CD4-positive, alpha-beta T cell (primary cell): ENCODE measurements at regions of chr20 and their contacts with region 1.

Region 1: DNA sequence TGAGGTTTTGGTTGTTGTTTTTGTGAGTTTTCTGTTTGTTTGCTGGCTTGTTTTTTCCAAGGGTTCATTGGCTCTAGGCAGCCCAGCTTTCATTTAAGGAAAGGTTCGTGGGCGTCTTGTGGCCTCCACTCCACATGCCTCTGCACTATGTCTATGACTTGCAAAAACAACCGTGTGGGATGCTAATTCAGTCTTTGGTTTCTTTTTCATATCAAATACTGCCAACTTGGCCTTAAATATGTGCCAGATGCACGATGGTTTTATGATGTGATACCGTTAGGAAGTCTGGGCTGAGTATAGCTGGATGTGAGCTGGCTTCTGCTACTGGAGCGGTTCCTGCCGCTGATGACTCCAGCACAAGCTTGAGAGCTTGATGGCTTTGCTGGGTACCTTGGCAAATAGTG is 96.3 kb downstream of the BMP2 start:
- DNase-seq: no peak
- ATAC-seq: no peak
- H3K4me3 ChIP-seq: no peak overlapping the region
- H3K4me3 Mint-ChIP-seq: no peak overlapping the region
- H3K27ac ChIP-seq: no peak overlapping the region
- H3K27ac Mint-ChIP-seq: no peak overlapping the region
- H3K4me1 ChIP-seq: no peaks in the 10 kb centered on the region
- H3K4me1 Mint-ChIP-seq: no peaks in the 10 kb centered on the region
- H3K27me3 ChIP-seq: no peaks in the 10 kb centered on the region
- H3K27me3 Mint-ChIP-seq: no peaks in the 10 kb centered on the region
- CTCF ChIP-seq: no peak

Region 2: DNA sequence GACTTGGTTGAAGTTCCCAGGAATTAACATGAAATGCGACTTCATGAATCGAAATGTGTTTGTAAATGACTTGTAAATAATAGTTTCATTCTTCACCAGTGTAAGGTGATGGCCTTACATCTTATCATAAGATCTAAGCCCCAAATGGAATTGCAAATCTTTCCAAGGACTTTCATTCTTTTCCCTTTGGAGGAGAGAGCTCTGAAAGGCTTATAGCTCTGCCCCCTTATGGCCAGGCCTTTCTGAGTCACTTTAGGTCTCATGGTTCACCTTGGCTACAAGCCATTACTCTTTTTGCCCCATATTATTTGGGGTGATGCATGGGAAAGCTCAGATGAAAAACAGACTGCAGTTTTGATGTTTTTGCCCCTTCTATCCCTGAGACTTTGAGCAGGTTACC is 305.5 kb before region 1 on chr20:
- CTCF ChIA-PET with region 1: no interaction called
- POLR2A ChIA-PET with region 1: no interaction called
- intact Hi-C with region 1: no loop called
- DNase-seq: no peak
- ATAC-seq: no peak
- H3K4me3 ChIP-seq: no peak overlapping the region
- H3K4me3 Mint-ChIP-seq: no peak overlapping the region
- H3K27ac ChIP-seq: no peak overlapping the region
- H3K27ac Mint-ChIP-seq: no peak overlapping the region
- H3K4me1 ChIP-seq: no peaks in the 10 kb centered on the region
- H3K4me1 Mint-ChIP-seq: no peaks in the 10 kb centered on the region
- H3K27me3 ChIP-seq: no peaks in the 10 kb centered on the region
- H3K27me3 Mint-ChIP-seq: no peaks in the 10 kb centered on the region
- CTCF ChIP-seq: no peak

Region 3: DNA sequence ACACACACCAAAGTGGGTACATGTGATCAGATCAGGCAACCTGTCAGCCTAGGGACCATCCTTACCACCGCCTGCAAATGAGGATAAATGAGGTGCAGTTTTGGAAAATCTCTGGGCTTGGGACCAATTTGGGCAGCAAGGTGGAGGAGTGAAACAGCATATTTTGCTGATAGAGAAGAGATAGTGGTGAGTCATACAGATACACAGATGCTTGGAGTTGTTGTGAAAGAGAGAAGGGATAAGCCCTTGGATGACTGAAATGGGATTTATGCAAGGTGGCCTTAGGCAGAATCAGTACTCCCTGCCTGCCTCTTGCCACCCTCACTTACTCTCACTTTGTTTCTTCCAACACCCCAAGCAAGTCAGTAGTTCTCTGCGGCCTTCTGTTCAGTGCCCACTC is 61.6 kb before region 1 on chr20:
- CTCF ChIA-PET with region 1: no interaction called
- POLR2A ChIA-PET with region 1: no interaction called
- intact Hi-C with region 1: loop called in 1 of 2 experiments (anchors 10 kb)
- DNase-seq: no peak
- ATAC-seq: no peak
- H3K4me3 ChIP-seq: no peak overlapping the region
- H3K4me3 Mint-ChIP-seq: no peak overlapping the region
- H3K27ac ChIP-seq: no peak overlapping the region
- H3K27ac Mint-ChIP-seq: no peak overlapping the region
- H3K4me1 ChIP-seq: no peaks in the 10 kb centered on the region
- H3K4me1 Mint-ChIP-seq: no peaks in the 10 kb centered on the region
- H3K27me3 ChIP-seq: no peaks in the 10 kb centered on the region
- H3K27me3 Mint-ChIP-seq: no peaks in the 10 kb centered on the region
- CTCF ChIP-seq: no peak